ENCODE measurements at regions of chr9 and their contacts with region 1.

Region 1: DNA sequence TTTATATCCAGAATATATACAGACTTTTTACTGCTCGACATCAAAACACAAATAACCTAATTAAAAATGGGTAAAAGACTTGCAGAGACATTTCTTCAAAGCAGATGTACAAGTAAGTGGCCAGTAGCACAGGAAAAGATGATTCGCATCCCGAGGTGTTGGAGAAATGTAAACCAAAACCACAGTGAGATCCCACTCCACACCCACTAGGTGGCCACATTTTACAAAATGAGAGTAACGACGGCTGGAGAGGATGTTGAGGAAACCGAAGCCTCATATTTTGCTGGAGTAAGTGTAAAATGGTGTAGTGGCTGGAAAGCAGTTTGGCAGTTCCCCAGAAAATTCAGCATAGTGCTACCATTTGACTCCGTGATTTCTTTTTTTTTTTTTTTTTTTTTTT is 21.2 kb upstream of the GBGT1 start:
- DNase-seq: peak in 1 of 2 donors; percentile 68
- ATAC-seq: peak in 7 of 8 donors; percentile 68 to 91 (median 84)
- H3K4me3 ChIP-seq: no peak overlapping the region
- H3K27ac ChIP-seq: no peak overlapping the region
- H3K4me1 ChIP-seq: peaks cover 0 to 17% (median 5%) of the 10 kb centered on the region in 9 donors
- H3K27me3 ChIP-seq: peaks cover 0 to 28% (median 11%) of the 10 kb centered on the region in 7 donors
- CTCF ChIP-seq: peak; percentile 32 to 73 (median 62)

Region 2: DNA sequence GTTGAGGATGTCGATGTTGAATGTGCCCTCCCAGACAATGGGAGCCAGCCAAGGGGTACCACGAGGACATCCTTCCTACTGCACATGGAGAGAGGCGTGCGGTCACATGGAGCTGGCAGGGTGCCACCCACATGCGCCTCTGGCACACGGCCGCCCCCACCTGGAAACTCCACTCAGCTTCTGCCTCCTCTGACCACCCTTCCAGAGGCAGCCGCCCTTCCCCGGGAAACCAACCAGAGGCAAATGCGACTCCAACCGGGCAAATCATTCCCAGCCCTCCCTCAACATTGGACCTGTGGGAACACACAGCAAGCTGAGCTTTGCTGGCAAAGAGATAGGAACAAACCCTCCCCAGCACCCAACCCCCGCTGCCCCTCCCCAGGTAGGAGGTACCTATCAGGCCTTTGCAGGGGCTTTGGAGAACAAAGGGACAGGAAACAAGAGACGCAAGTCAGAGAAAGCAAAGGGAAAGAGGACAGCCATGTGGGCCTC is 72.5 kb after region 1 on chr9:
- intact Hi-C with region 1: loop called in 2 of 10 experiments (anchors 1 to 10 kb)
- DNase-seq: peak in 1 of 2 donors; percentile 68
- ATAC-seq: peak in 7 of 8 donors; percentile 47 to 87 (median 72)
- H3K4me3 ChIP-seq: no peak overlapping the region
- H3K27ac ChIP-seq: peak overlapping the region in 6 of 10 donors; percentile 44 to 88 (median 73)
- H3K4me1 ChIP-seq: peaks cover 0 to 42% (median 22%) of the 10 kb centered on the region in 9 donors
- H3K27me3 ChIP-seq: no peaks in the 10 kb centered on the region
- CTCF ChIP-seq: peak in 3 of 9 donors; percentile 25 to 49 (median 39)

Region 3: GRCh38 chr9:133320421-133320881 is 135.5 kb after region 1 on chr9:
- intact Hi-C with region 1: loop called in 6 of 10 experiments (anchors 5 kb)
- DNase-seq: no peak
- ATAC-seq: no peak
- H3K4me3 ChIP-seq: no peak overlapping the region
- H3K27ac ChIP-seq: no peak overlapping the region
- H3K4me1 ChIP-seq: no peaks in the 10 kb centered on the region
- H3K27me3 ChIP-seq: peaks cover 0 to 10% (median 0%) of the 10 kb centered on the region in 7 donors
- CTCF ChIP-seq: no peak

Region 4: GRCh38 chr9:133335878-133336811 is 151.2 kb after region 1 on chr9 and contains the start of gene SURF6:
- intact Hi-C with region 1: loop called in 4 of 10 experiments (anchors 2 to 5 kb)
- DNase-seq: peak; percentile 91
- ATAC-seq: peak; percentile 94 to 96 (median 96)
- H3K4me3 ChIP-seq: peak within 1 kb of the TSS; percentile 69 to 95 (median 82)
- H3K27ac ChIP-seq: peak within 1 kb of the TSS in 9 of 10 donors; percentile 63 to 85 (median 82)
- H3K4me1 ChIP-seq: peaks cover 4 to 56% (median 23%) of the 10 kb centered on the region in 9 donors
- H3K27me3 ChIP-seq: no peaks in the 10 kb centered on the region
- CTCF ChIP-seq: no peak
- total RNA-seq, gene SURF6: 9.1 to 14.2 (median 11.3) TPM

Region 5: GRCh38 chr9:133478851-133479711 is 294.1 kb after region 1 on chr9 and contains the start of gene SLC2A6:
- intact Hi-C with region 1: loop called in 1 of 10 experiments (anchors 2 kb)
- DNase-seq: peak; percentile 80 to 88
- ATAC-seq: peak; percentile 95 to 98 (median 98)
- H3K4me3 ChIP-seq: peak within 1 kb of the TSS; percentile 53 to 77 (median 65)
- H3K27ac ChIP-seq: peak within 1 kb of the TSS; percentile 33 to 90 (median 85)
- H3K4me1 ChIP-seq: peaks cover 7 to 55% (median 18%) of the 10 kb centered on the region in 9 donors
- H3K27me3 ChIP-seq: peaks cover 0 to 7% (median 0%) of the 10 kb centered on the region in 7 donors
- CTCF ChIP-seq: no peak
- total RNA-seq, gene SLC2A6: 1.3 to 7.0 (median 2.2) TPM